ENCODE measurements at regions of chr15 and their contacts with region 1.

Region 1: DNA sequence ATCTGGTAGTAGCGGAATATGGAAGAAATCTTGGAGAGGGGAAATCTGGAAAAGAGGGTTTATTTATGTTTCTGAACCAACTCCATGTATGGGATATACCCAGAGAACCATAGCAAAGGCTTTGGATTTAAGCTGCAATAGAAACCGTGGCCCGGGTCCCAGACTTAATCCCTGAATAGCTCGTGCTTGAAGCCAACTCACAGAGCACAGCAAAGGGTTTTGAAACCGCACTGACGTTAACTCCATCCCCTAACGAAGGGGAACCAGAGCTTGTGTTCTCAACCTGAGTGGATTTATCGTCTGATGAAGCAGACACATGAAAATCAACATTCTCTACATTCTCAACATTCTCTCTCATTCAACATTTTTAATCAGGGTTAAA is 154.6 kb downstream of the APBA2 start:
- DNase-seq: no peak
- H3K4me3 ChIP-seq: no peak overlapping the region
- H3K27ac ChIP-seq: no peak overlapping the region
- H3K4me1 ChIP-seq: no peaks in the 10 kb centered on the region
- H3K27me3 ChIP-seq: no peaks in the 10 kb centered on the region
- CTCF ChIP-seq: no peak
- POLR2A ChIP-seq: no peak

Region 2: DNA sequence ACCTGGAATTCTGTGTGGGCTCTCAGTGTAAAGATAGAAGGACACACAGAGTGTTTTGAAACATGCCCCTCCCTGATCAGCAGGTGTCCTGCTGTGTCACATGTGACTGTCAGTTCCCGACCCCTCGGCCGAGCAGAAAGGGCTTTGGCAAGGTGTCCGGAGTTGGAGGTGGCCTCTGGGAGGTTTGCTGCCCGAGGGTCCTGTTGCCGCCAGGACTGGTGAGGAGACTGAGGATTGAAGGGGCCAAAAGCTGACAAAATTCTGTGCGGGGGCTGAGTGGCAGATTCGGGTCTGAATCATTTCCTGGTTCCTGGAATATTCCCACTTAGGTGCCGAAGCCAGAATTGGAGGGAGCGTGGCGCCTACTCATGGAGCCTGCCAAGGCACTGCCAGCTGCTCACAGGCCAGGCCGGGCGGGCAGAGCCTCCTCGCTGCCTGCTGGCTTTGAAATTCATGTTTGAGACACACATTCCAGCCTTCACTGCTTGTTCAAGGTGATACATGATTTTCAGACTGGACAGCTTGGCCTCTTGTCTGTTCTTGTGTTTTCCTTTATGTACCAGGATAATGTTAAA is 70.8 kb before region 1 on chr15:
- intact Hi-C with region 1: no loop called
- DNase-seq: peak in 1 of 2 donors; percentile 34
- H3K4me3 ChIP-seq: no peak overlapping the region
- H3K27ac ChIP-seq: no peak overlapping the region
- H3K4me1 ChIP-seq: no peaks in the 10 kb centered on the region
- H3K27me3 ChIP-seq: no peaks in the 10 kb centered on the region
- CTCF ChIP-seq: no peak
- POLR2A ChIP-seq: no peak

Region 3: GRCh38 chr15:28994831-28995596 is 45.3 kb before region 1 on chr15:
- intact Hi-C with region 1: loop called (anchors 5 kb)
- DNase-seq: peak in 1 of 2 donors; percentile 58
- H3K4me3 ChIP-seq: no peak overlapping the region
- H3K27ac ChIP-seq: no peak overlapping the region
- H3K4me1 ChIP-seq: no peaks in the 10 kb centered on the region
- H3K27me3 ChIP-seq: no peaks in the 10 kb centered on the region
- CTCF ChIP-seq: no peak
- POLR2A ChIP-seq: no peak